ENCODE measurements at regions of chr15 and their contacts with region 1.

Region 1: DNA sequence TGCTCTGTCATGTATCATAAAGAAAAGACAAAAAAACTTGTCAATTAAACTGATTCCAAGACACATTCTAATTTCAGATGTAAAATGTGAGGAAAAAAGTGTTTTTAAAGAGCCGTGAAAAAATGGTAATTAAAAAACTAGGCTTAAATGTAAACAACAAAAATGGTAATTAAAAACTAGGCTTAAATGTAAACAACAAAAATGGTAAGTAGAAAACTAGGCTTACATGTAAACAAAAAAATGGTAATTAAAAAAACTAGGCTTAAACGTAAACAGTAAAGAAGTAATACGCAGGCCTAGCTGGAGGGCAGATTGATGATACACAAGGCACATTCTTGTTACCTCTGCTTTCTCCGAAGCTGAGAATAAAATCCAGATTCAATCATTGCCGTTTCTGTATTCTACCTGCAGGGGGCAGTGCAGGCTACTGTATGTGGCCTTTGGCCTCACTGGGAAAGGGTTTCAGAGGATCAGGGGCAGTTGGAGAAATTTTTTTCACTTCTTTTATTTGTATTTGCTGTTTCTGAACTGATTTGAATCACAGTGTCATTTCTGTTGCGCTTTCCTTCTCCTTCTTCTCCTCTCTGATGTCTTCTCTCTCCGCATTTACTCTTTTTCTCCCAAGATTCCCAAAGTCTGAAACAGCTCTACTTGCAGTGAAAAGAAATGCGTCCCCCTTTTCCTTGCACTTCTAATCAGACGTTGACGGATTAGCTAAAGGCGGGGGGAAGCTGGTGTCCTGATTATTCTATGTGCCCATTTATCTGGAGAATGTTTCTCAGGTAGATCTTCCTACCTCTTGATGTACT is 67.2 kb upstream of the MCTP2 start:
- H3K4me3 ChIP-seq: no peak overlapping the region
- H3K27ac ChIP-seq: no peak overlapping the region
- H3K4me1 ChIP-seq: no peaks in the 10 kb centered on the region
- CTCF ChIP-seq: peak; percentile 61

Region 2: DNA sequence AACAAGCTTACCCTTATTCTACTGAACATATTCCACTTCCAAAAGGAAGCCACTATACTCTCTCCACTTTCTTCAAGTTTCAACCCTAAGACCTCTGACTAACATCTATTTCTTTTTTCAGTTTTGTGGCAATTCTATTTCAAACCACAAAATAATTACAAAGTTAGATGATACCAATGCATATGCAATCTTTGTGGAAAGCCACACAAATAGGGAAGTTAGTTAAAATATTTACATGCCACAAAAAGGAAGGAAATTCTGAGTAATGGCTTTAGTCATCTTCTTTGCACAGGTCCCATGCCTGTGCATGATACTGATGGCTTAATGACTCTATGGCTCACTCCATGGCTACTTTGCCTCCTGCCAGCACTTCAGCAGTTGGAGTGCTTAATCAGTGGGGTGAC is 10.2 kb after region 1 on chr15:
- CTCF ChIA-PET with region 1: interaction called, 14 read pairs
- POLR2A ChIA-PET with region 1: no interaction called
- H3K4me3 ChIP-seq: no peak overlapping the region
- H3K27ac ChIP-seq: no peak overlapping the region
- H3K4me1 ChIP-seq: no peaks in the 10 kb centered on the region
- CTCF ChIP-seq: no peak

Region 3: GRCh38 chr15:94238539-94239118 is 74.4 kb after region 1 on chr15:
- CTCF ChIA-PET with region 1: interaction called, 13 read pairs
- POLR2A ChIA-PET with region 1: no interaction called
- H3K4me3 ChIP-seq: no peak overlapping the region
- H3K27ac ChIP-seq: no peak overlapping the region
- H3K4me1 ChIP-seq: peaks cover 18% of the 10 kb centered on the region
- CTCF ChIP-seq: no peak

Region 4: GRCh38 chr15:94317201-94317600 is 153.0 kb after region 1 on chr15:
- CTCF ChIA-PET with region 1: interaction called, 258 read pairs
- POLR2A ChIA-PET with region 1: no interaction called
- H3K4me3 ChIP-seq: no peak overlapping the region
- H3K27ac ChIP-seq: no peak overlapping the region
- H3K4me1 ChIP-seq: no peaks in the 10 kb centered on the region
- CTCF ChIP-seq: no peak

Region 5: GRCh38 chr15:94335616-94336015 is 171.4 kb after region 1 on chr15:
- CTCF ChIA-PET with region 1: interaction called, 14 read pairs
- POLR2A ChIA-PET with region 1: no interaction called
- H3K4me3 ChIP-seq: no peak overlapping the region
- H3K27ac ChIP-seq: no peak overlapping the region
- H3K4me1 ChIP-seq: no peaks in the 10 kb centered on the region
- CTCF ChIP-seq: no peak